ENCODE measurements at regions of chr17 and their contacts with region 1.

Region 1: GRCh38 chr17:27601069-27601975 is 29.7 kb upstream of the LGALS9 start:
- DNase-seq: peak; percentile 87
- H3K4me3 ChIP-seq: no peak overlapping the region
- H3K27ac ChIP-seq: no peak overlapping the region
- H3K4me1 ChIP-seq: peaks cover 14% of the 10 kb centered on the region
- H3K27me3 ChIP-seq: no peaks in the 10 kb centered on the region
- CTCF ChIP-seq: peak; percentile 82 to 92
- POLR2A ChIP-seq: no peak

Region 2: GRCh38 chr17:27245230-27245696 is 356.1 kb before region 1 on chr17:
- CTCF ChIA-PET with region 1: interaction called, 121 read pairs
- POLR2A ChIA-PET with region 1: interaction called, 3 read pairs
- dilution Hi-C with region 1: no loop called
- intact Hi-C with region 1: loop called (anchors 1 kb)
- DNase-seq: peak; percentile 88
- H3K4me3 ChIP-seq: no peak overlapping the region
- H3K27ac ChIP-seq: peak overlapping the region; percentile 32
- H3K4me1 ChIP-seq: peaks cover 27% of the 10 kb centered on the region
- H3K27me3 ChIP-seq: no peaks in the 10 kb centered on the region
- CTCF ChIP-seq: peak; percentile 79 to 81
- POLR2A ChIP-seq: peak; percentile 55

Region 3: DNA sequence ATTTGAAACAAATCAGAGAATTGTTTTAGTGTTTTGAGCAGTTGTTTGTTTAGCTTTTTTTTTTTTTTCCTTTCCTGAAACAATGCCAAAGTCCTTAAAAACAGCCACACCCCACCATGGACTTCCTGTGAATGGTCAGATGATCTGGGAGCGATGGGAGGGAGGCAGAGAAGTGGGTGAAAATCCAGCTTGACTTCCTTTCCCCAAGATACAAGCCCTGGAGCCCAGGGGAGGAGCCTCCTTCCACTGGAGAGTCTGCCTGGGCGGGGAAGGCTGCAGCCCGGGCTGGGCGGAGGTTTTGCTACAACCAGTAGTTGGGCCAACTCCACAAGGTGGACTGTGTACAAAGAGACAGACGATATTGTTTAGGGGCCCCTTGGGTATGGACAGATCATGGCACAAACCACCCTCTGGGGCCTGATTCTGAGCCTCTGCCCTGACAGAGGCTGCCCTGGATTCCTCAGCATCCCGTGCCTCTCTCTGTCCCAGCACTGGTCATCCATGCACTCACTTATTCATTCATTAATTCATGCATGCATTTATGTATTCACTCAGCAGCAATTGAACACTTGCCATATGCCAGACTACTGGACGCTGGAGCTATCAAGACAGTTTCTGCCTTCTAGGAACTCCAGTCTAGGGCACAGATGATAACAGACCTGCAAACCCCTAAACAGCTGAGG is 277.7 kb before region 1 on chr17:
- CTCF ChIA-PET with region 1: interaction called, 12 read pairs
- POLR2A ChIA-PET with region 1: no interaction called
- dilution Hi-C with region 1: no loop called
- intact Hi-C with region 1: no loop called
- DNase-seq: peak; percentile 77
- H3K4me3 ChIP-seq: no peak overlapping the region
- H3K27ac ChIP-seq: no peak overlapping the region
- H3K4me1 ChIP-seq: peaks cover 12% of the 10 kb centered on the region
- H3K27me3 ChIP-seq: no peaks in the 10 kb centered on the region
- CTCF ChIP-seq: no peak
- POLR2A ChIP-seq: peak; percentile 68

Region 4: GRCh38 chr17:27381007-27381501 is 220.3 kb before region 1 on chr17:
- CTCF ChIA-PET with region 1: interaction called, 36 read pairs
- POLR2A ChIA-PET with region 1: interaction called, 3 read pairs
- dilution Hi-C with region 1: no loop called
- intact Hi-C with region 1: loop called (anchors 1 kb)
- DNase-seq: peak; percentile 51
- H3K4me3 ChIP-seq: no peak overlapping the region
- H3K27ac ChIP-seq: peak overlapping the region; percentile 77
- H3K4me1 ChIP-seq: peaks cover 45% of the 10 kb centered on the region
- H3K27me3 ChIP-seq: no peaks in the 10 kb centered on the region
- CTCF ChIP-seq: peak; percentile 94 to 95
- POLR2A ChIP-seq: no peak

Region 5: DNA sequence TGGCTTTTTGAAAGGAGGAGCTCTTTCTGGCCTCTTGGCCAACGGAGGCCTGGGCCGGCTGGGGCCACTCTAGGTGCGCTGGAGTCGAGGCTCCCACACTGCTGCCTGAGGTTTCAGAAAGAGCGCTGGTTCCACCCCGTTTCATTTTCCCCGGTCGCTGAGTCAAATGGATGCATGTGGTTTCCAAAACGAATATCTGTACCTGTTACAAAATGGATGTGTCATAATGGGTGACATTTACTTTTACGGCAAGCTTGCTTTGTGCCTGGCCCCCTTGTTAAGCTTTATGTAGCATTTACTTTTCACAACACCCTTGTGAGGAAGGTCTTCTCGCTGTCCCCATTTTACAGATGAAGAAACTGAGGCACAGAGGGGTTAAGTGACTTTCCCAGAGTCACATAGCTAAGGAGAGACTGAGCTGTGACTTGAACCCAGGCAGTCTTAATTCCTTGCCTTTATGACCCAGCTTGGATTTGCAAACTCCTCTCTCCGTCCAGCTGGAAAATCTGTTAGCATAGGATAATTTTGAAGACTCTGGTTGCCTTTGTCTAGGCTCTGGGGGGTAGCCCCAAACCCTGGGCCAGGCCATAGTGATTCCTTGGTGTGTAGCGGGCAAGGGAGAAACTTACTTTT is 134.5 kb before region 1 on chr17:
- CTCF ChIA-PET with region 1: interaction called, 24 read pairs
- POLR2A ChIA-PET with region 1: no interaction called
- dilution Hi-C with region 1: no loop called
- intact Hi-C with region 1: no loop called
- DNase-seq: no peak
- H3K4me3 ChIP-seq: no peak overlapping the region
- H3K27ac ChIP-seq: no peak overlapping the region
- H3K4me1 ChIP-seq: peaks cover 11% of the 10 kb centered on the region
- H3K27me3 ChIP-seq: no peaks in the 10 kb centered on the region
- CTCF ChIP-seq: no peak
- POLR2A ChIP-seq: no peak

Region 6: GRCh38 chr17:27578718-27579085 is 22.6 kb before region 1 on chr17:
- CTCF ChIA-PET with region 1: interaction called, 18 read pairs
- POLR2A ChIA-PET with region 1: no interaction called
- dilution Hi-C with region 1: no loop called
- intact Hi-C with region 1: no loop called
- DNase-seq: no peak
- H3K4me3 ChIP-seq: no peak overlapping the region
- H3K27ac ChIP-seq: peak overlapping the region; percentile 16
- H3K4me1 ChIP-seq: peaks cover 17% of the 10 kb centered on the region
- H3K27me3 ChIP-seq: no peaks in the 10 kb centered on the region
- CTCF ChIP-seq: no peak
- POLR2A ChIP-seq: no peak